Prostate gland (tissue), 2 donors: ENCODE measurements at regions of chrX and their contacts with region 1.

Region 1: GRCh38 chrX:120446498-120446897 is 22.6 kb downstream of the LAMP2 start:
- DNase-seq: peak; percentile 37
- H3K4me3 ChIP-seq: no peak overlapping the region
- H3K27ac ChIP-seq: no peak overlapping the region
- H3K4me1 ChIP-seq: no peaks in the 10 kb centered on the region
- H3K27me3 ChIP-seq: no peaks in the 10 kb centered on the region
- CTCF ChIP-seq: peak in 1 of 4 experiments; percentile 18
- POLR2A ChIP-seq: no peak

Region 2: GRCh38 chrX:120213436-120214265 is 232.8 kb before region 1 on chrX:
- intact Hi-C with region 1: no loop called
- DNase-seq: peak; percentile 15
- H3K4me3 ChIP-seq: no peak overlapping the region
- H3K27ac ChIP-seq: no peak overlapping the region
- H3K4me1 ChIP-seq: no peaks in the 10 kb centered on the region
- H3K27me3 ChIP-seq: no peaks in the 10 kb centered on the region
- CTCF ChIP-seq: peak in 3 of 4 experiments; percentile 37 to 50 (median 41)
- POLR2A ChIP-seq: no peak

Region 3: DNA sequence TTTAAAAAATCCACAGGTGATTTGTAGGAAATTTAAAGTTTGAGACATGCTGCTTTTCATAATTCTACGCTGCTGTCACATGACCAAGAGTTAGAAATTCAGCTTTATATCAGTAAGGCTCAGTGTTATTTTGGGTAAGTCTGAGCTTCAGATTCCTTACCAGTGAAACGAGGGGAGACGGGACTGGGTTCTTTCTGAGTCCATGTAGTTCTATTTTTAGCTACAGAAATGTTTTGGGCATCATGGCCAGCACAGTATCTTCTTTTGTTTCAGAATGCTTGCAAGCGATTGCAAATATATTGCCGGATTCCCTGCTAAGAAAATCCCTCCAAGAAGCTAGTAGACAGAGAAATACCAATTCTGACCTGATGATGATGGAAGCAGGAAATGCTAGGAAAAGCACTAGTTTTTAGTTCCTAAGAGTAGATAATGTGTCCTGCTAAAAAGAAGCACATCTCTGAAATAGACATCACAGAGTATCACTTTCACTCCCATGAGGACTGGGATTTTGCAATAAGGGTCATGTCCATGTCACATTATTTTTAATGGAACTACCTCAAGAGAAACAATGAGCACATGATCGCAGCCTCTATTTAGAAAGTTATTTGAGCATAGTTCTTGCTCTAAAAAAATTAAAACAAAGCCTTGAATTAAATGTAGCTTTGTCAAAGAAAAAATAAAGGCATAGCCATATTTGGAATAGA is 73.7 kb before region 1 on chrX:
- intact Hi-C with region 1: loop called (anchors 10 kb)
- DNase-seq: no peak
- H3K4me3 ChIP-seq: no peak overlapping the region
- H3K27ac ChIP-seq: no peak overlapping the region
- H3K4me1 ChIP-seq: no peaks in the 10 kb centered on the region
- H3K27me3 ChIP-seq: no peaks in the 10 kb centered on the region
- CTCF ChIP-seq: no peak
- POLR2A ChIP-seq: no peak